CD14-positive monocyte (primary cell): ENCODE measurements at regions of chr2 and their contacts with region 1.

Region 1: DNA sequence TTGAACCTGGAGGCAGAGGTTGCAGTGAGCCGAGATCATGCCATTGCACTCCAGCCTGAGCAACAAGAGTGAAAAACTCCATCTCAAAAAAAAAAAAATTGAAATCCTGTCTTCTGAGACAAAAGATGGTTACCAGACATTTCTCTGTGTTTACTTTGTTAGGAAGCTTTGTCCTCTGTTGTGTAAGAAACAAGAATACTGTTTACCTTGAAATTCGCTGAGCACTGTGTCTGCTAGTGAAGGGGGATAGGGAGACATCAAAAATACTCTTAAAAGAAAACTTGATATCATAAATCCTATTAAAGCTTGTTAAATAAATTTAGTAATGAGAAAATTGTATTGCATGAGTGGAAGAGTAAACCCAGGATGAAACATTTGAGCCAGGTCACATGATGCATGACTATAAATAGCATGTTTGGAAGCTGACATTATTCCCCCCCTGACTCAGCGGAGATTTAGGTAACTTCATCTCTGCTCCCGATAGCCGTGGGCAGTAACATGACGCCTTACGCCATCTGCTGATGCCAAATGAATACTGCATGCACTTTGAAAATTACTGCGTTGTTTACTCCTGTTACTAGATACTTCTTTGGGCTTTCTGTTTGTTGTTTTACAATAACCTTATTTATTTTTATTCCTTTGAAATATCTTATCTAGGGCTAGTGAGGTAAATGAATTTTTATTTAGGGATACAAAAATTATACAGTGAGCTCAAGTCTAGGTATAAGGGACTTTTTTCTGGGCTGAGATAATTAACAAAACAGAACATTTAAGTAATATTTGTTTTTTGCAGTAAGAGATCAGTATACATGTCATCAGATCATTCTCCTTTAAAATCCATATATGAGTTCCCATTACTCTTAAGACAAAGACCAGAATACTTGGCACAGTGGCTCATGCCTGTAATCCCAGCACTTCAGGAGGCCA is 134.9 kb downstream of the MAP3K20 start:
- DNase-seq: peak; percentile 69 to 92 (median 79)
- H3K4me3 ChIP-seq: no peak overlapping the region
- H3K4me3 Mint-ChIP-seq: no peak overlapping the region
- H3K27ac ChIP-seq: peak overlapping the region in 1 of 2 donors; percentile 27
- H3K27ac Mint-ChIP-seq: peak overlapping the region in 3 of 7 donors; percentile 52 to 78 (median 58)
- H3K4me1 ChIP-seq: peaks cover 6% of the 10 kb centered on the region in 2 donors
- H3K4me1 Mint-ChIP-seq: peaks cover 15% of the 10 kb centered on the region
- H3K27me3 ChIP-seq: no peaks in the 10 kb centered on the region
- H3K27me3 Mint-ChIP-seq: no peaks in the 10 kb centered on the region
- CTCF ChIP-seq: peak; percentile 88

Region 2: GRCh38 chr2:173027181-173028128 is 183.1 kb before region 1 on chr2:
- intact Hi-C with region 1: loop called (anchors 2 kb)
- DNase-seq: peak; percentile 81 to 86 (median 82)
- H3K4me3 ChIP-seq: no peak overlapping the region
- H3K4me3 Mint-ChIP-seq: no peak overlapping the region
- H3K27ac ChIP-seq: no peak overlapping the region
- H3K27ac Mint-ChIP-seq: no peak overlapping the region
- H3K4me1 ChIP-seq: peaks cover 0 to 6% of the 10 kb centered on the region in 2 donors
- H3K4me1 Mint-ChIP-seq: peaks cover 6% of the 10 kb centered on the region
- H3K27me3 ChIP-seq: no peaks in the 10 kb centered on the region
- H3K27me3 Mint-ChIP-seq: peaks cover 0 to 4% (median 4%) of the 10 kb centered on the region in 3 donors
- CTCF ChIP-seq: peak; percentile 91

Region 3: GRCh38 chr2:173033084-173033483 is 177.4 kb before region 1 on chr2:
- intact Hi-C with region 1: loop called in 1 of 2 experiments (anchors 2 kb)
- DNase-seq: no peak
- H3K4me3 ChIP-seq: no peak overlapping the region
- H3K4me3 Mint-ChIP-seq: no peak overlapping the region
- H3K27ac ChIP-seq: no peak overlapping the region
- H3K27ac Mint-ChIP-seq: no peak overlapping the region
- H3K4me1 ChIP-seq: no peaks in the 10 kb centered on the region
- H3K4me1 Mint-ChIP-seq: peaks cover 2% of the 10 kb centered on the region
- H3K27me3 ChIP-seq: no peaks in the 10 kb centered on the region
- H3K27me3 Mint-ChIP-seq: peaks cover 0 to 2% (median 0%) of the 10 kb centered on the region in 3 donors
- CTCF ChIP-seq: no peak

Region 4: GRCh38 chr2:173249661-173250641 is 39.4 kb after region 1 on chr2:
- intact Hi-C with region 1: no loop called
- DNase-seq: no peak
- H3K4me3 ChIP-seq: no peak overlapping the region
- H3K4me3 Mint-ChIP-seq: no peak overlapping the region
- H3K27ac ChIP-seq: no peak overlapping the region
- H3K27ac Mint-ChIP-seq: peak overlapping the region in 1 of 7 donors; percentile 22
- H3K4me1 ChIP-seq: no peaks in the 10 kb centered on the region
- H3K4me1 Mint-ChIP-seq: no peaks in the 10 kb centered on the region
- H3K27me3 ChIP-seq: no peaks in the 10 kb centered on the region
- H3K27me3 Mint-ChIP-seq: peaks cover 0 to 2% (median 0%) of the 10 kb centered on the region in 3 donors
- CTCF ChIP-seq: no peak